Transverse colon (tissue), 4 donors: ENCODE measurements at regions of chr5 and their contacts with region 1.

Region 1: DNA sequence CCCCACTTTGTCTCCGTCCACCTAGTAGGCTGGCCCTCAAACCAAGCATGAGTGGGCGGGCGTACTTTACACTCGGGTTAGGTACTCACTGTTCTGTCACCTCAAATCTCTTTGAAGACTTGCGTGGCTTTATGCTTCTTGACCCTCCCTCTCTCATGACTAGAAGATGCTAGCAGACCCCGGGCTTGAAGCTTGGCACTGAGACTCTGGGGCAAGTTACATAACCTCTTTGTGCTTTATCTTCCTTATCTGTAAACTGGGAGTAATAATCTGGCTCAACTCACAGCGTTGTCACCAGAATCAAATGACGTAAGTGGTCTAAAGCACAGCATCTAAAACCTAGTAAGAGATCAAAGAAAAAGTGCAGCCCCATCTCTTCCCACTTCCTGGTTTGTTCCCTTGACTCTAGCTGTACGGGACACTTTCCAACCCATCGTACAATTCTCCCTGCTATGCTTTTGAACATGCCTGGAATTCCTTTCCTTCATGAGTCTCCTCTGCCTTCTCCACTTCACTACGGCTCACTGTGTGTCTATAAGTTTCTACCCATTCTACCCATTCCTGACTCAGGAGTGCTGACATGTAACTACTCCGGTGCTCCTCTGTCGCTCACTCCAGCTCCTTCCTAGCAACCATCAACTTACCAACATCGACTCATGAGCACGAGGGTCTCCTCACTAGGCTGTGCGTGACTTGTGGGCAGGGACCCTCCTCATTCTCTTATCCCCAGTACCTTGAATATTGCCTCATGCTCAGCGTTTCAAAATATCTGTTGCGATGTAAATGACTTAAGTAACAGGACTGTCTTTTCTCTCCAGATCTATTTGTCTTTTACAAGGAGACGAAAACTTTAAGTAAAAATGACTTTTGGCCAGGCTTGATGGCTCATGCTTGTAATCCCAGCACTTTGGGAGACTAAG is 72.9 kb downstream of the BASP1 start:
- DNase-seq: no peak
- H3K4me3 ChIP-seq: no peak overlapping the region
- H3K27ac ChIP-seq: no peak overlapping the region
- H3K4me1 ChIP-seq: no peaks in the 10 kb centered on the region
- H3K27me3 ChIP-seq: no peaks in the 10 kb centered on the region
- CTCF ChIP-seq: no peak
- EP300 ChIP-seq: no peak
- POLR2A ChIP-seq: no peak

Region 2: DNA sequence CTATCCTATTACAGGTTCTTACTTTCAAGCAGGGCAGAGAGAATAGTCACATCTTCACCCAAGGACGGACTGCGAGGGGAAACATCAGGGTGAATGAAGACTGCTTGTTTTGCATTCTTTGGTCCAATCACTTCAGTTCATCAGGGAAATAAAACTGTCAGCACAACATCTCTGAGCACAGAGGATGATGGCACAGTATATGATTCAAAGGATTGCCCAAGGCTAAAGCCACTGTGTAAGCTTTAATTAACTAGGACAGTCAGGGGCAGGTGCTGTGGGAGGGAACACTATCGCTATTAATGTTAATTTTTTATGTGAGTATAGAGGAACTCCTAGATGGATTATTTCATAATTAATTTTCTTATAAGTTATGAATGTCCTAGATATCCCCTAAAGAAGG is 39.2 kb after region 1 on chr5:
- in situ Hi-C with region 1: no loop called
- intact Hi-C with region 1: loop called (anchors 1 kb)
- DNase-seq: no peak
- H3K4me3 ChIP-seq: no peak overlapping the region
- H3K27ac ChIP-seq: no peak overlapping the region
- H3K4me1 ChIP-seq: peaks cover 0 to 14% (median 0%) of the 10 kb centered on the region in 4 donors
- H3K27me3 ChIP-seq: no peaks in the 10 kb centered on the region
- CTCF ChIP-seq: no peak
- EP300 ChIP-seq: no peak
- POLR2A ChIP-seq: no peak